ENCODE measurements at regions of chr1 and their contacts with region 1.

Region 1: GRCh38 chr1:179882243-179883039 is at the start of gene TOR1AIP1:
- DNase-seq: peak; percentile 98
- H3K4me3 Mint-ChIP-seq: peak within 1 kb of the TSS; percentile 96
- H3K27ac Mint-ChIP-seq: peak within 1 kb of the TSS; percentile 99
- H3K4me1 Mint-ChIP-seq: peaks cover 57% of the 10 kb centered on the region
- H3K27me3 Mint-ChIP-seq: no peaks in the 10 kb centered on the region
- total RNA-seq, gene TOR1AIP1: 39.4 to 42.3 TPM

Region 2: DNA sequence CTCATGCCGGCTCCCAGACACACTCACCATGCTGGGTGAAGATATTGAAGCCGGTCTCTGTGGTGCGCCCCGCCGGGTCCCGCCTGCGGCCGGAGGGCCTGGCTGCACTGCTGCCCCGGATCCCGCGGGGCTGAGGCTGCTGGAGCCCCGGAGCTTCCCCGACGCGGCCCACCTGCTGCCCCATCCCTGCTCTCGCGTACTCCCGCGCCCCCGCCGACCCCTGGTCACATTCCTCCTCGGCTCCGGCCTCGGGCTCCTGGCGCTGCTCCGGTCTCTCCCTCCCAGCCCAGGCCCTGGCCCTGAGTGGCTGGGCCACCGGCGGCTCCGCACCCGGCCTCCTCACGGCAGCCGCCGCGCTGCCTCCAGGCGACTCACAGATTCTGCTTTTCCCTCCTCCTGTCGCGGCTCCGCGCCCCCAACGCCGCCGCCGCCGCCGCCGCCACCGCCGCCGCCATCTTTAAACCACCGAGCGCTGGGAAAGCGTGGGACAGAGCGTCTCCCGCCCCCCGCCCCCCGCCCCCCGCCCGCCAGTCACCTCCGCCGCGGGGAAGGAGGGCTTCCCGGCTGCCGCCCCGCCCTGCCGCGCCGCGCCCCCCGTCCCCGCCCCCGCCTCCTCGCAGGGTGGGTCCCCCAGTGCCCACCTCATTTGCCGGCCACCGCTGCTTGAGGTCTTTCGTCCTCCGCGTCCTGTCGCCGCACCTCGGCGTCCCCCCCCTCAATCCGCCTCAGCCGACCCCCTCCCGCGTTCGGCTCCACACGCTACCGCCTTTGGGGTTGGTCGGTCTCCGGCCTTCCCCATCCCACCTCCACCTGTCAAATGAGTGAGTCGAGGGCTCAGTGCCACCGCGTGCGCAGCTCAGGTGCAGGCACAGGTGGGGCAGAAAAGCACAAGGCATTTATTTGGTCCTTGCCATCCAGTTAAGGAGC is 653.0 kb before region 1 on chr1 and contains the start of gene ABL2:
- CTCF ChIA-PET with region 1: no interaction called
- intact Hi-C with region 1: loop called (anchors 1 kb)
- DNase-seq: peak; percentile 49
- H3K4me3 Mint-ChIP-seq: peak within 1 kb of the TSS; percentile 90
- H3K27ac Mint-ChIP-seq: peak within 1 kb of the TSS; percentile 85
- H3K4me1 Mint-ChIP-seq: peaks cover 31% of the 10 kb centered on the region
- H3K27me3 Mint-ChIP-seq: no peaks in the 10 kb centered on the region
- total RNA-seq, gene ABL2: 8.1 TPM

Region 3: GRCh38 chr1:179706339-179706941 is 176.0 kb before region 1 on chr1:
- CTCF ChIA-PET with region 1: no interaction called
- intact Hi-C with region 1: loop called (anchors 5 kb)
- DNase-seq: peak; percentile 83
- H3K4me3 Mint-ChIP-seq: no peak overlapping the region
- H3K27ac Mint-ChIP-seq: no peak overlapping the region
- H3K4me1 Mint-ChIP-seq: peaks cover 23% of the 10 kb centered on the region
- H3K27me3 Mint-ChIP-seq: no peaks in the 10 kb centered on the region

Region 4: GRCh38 chr1:179867807-179868330 is 14.6 kb before region 1 on chr1:
- CTCF ChIA-PET with region 1: interaction called, 16 read pairs
- intact Hi-C with region 1: no loop called
- DNase-seq: peak; percentile 71
- H3K4me3 Mint-ChIP-seq: no peak overlapping the region
- H3K27ac Mint-ChIP-seq: no peak overlapping the region
- H3K4me1 Mint-ChIP-seq: peaks cover 13% of the 10 kb centered on the region
- H3K27me3 Mint-ChIP-seq: no peaks in the 10 kb centered on the region

Region 5: GRCh38 chr1:179984942-179985341 is 102.5 kb after region 1 on chr1:
- CTCF ChIA-PET with region 1: no interaction called
- intact Hi-C with region 1: no loop called
- DNase-seq: no peak
- H3K4me3 Mint-ChIP-seq: no peak overlapping the region
- H3K27ac Mint-ChIP-seq: no peak overlapping the region
- H3K4me1 Mint-ChIP-seq: peaks cover 20% of the 10 kb centered on the region
- H3K27me3 Mint-ChIP-seq: no peaks in the 10 kb centered on the region

Region 6: GRCh38 chr1:180154325-180155181 is 272.1 kb after region 1 on chr1 and contains the start of gene QSOX1:
- CTCF ChIA-PET with region 1: no interaction called
- intact Hi-C with region 1: loop called (anchors 1 kb)
- DNase-seq: peak; percentile 91
- H3K4me3 Mint-ChIP-seq: peak within 1 kb of the TSS; percentile 89
- H3K27ac Mint-ChIP-seq: peak within 1 kb of the TSS; percentile 67
- H3K4me1 Mint-ChIP-seq: peaks cover 22% of the 10 kb centered on the region
- H3K27me3 Mint-ChIP-seq: no peaks in the 10 kb centered on the region
- total RNA-seq, gene QSOX1: 27.6 to 31.9 TPM

Region 7: GRCh38 chr1:180631766-180632325 is 749.4 kb after region 1 on chr1 and contains the start of gene XPR1:
- CTCF ChIA-PET with region 1: no interaction called
- intact Hi-C with region 1: loop called (anchors 2 kb)
- DNase-seq: peak; percentile 99
- H3K4me3 Mint-ChIP-seq: no peak within 1 kb of the TSS
- H3K27ac Mint-ChIP-seq: peak within 1 kb of the TSS; percentile 77
- H3K4me1 Mint-ChIP-seq: peaks cover 12% of the 10 kb centered on the region
- H3K27me3 Mint-ChIP-seq: no peaks in the 10 kb centered on the region
- total RNA-seq, gene XPR1: 14.8 to 18.1 TPM

Region 8: DNA sequence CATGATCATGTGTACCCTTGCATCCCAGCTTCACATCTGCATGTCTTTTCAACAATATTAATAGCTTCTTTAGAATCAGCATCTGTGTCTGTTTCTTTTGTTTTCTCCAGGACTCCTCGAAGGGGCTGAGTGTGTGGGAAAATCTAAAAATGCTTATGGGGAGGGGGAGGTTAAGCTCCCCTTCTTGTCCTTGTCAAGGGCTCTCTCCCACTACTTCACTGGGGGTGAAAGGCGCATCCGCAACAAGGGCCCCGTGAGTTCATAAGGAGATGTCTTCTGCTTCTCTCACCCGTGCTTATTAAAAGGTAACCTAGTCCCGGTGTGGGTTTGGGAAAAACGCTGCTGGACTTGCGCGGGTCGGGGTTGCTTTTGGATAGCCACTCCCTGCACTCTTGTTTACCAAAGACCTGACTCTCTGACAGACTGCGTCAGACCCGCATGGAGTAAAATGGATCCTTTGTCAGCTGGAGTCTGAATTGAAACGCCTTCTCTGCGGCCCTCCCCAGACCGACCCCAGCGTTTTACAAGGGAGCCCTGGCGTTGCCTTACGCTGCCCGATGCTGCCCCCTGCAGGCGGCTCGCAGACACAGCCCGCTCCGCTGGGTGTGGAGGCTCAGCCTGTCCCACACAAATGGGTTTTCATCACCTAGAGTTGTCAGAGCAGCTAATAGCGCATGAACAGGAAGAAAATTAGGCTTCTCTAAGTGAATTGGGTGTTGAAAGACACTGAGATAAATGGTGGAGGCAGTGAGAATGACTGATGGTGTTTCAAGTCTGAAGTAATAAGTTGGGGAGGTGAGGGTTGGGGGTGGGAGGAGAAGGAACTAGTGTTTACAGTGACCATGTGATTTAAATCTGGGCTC is 1259.9 kb after region 1 on chr1:
- CTCF ChIA-PET with region 1: no interaction called
- intact Hi-C with region 1: loop called (anchors 5 kb)
- DNase-seq: peak; percentile 93
- H3K4me3 Mint-ChIP-seq: peak overlapping the region; percentile 10
- H3K27ac Mint-ChIP-seq: peak overlapping the region; percentile 55
- H3K4me1 Mint-ChIP-seq: peaks cover 40% of the 10 kb centered on the region
- H3K27me3 Mint-ChIP-seq: no peaks in the 10 kb centered on the region

Measured in activated naive CD4-positive, alpha-beta T cell treated with anti-CD3 and anti-CD28 coated beads for 36 hours (primary cell).